ENCODE measurements at regions of chr9 and their contacts with region 1.

Region 1: GRCh38 chr9:22158927-22159346 is 149.8 kb upstream of the CDKN2B start:
- DNase-seq: peak; percentile 59
- H3K4me3 ChIP-seq: no peak overlapping the region
- H3K27ac ChIP-seq: peak overlapping the region; percentile 84
- H3K4me1 ChIP-seq: peaks cover 29% of the 10 kb centered on the region
- H3K27me3 ChIP-seq: no peaks in the 10 kb centered on the region
- CTCF ChIP-seq: no peak
- POLR2A ChIP-seq: peak; percentile 54

Region 2: DNA sequence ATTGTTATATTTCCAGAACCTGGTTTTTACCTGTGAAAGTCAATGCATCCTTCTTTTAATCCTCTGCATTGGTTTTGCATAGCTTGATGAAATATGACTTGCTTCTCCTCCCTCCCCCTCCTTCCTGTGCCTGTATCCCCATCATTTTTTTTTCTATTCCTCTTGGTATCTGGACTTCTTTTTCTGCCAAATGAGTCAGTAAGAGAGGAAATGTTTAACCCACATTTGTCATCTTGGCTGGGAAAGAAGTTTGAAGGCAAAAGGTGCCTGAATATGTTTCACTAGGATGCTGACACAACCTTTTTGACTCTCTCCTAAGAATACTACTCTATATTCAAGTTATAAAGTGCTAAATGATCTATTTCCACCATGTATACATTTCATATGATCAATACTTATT is 114.4 kb before region 1 on chr9:
- CTCF ChIA-PET with region 1: no interaction called
- POLR2A ChIA-PET with region 1: no interaction called
- dilution Hi-C with region 1: no loop called
- intact Hi-C with region 1: loop called (anchors 1 kb)
- DNase-seq: peak; percentile 87
- H3K4me3 ChIP-seq: no peak overlapping the region
- H3K27ac ChIP-seq: no peak overlapping the region
- H3K4me1 ChIP-seq: peaks cover 24% of the 10 kb centered on the region
- H3K27me3 ChIP-seq: no peaks in the 10 kb centered on the region
- CTCF ChIP-seq: no peak
- POLR2A ChIP-seq: no peak

Region 3: DNA sequence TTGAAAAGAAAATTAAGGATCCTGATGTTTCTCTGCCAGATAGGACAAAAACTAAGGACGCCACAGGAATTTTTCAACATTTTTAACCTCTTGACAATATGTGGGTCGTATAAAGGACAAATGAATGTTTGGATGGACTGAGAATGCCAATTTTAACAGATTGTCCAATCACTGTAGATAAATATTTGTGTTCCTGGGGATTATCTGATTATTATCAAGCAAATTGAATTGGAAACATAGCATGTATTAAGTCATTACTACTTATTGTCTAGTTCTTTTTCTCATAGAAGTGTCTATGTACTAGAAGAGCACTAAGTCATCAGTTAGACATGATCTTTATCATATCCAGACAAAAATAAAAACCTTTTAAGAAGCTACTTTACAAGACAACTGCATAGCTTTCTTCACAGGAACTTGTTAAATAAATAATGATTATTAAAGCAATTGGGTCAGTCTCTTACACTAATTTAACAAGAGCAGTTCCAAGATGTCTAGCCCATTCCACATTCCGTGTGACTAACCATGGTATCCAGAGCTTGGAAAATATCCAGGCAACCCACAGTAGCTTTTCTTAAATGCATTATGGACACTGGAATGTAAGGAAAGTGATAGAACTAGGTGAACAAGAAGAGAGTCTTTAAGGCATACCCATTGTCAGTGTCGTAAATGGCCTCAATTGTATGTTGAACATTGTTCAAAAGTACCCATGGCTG is 22.3 kb before region 1 on chr9:
- CTCF ChIA-PET with region 1: no interaction called
- POLR2A ChIA-PET with region 1: no interaction called
- dilution Hi-C with region 1: no loop called
- intact Hi-C with region 1: no loop called
- DNase-seq: no peak
- H3K4me3 ChIP-seq: no peak overlapping the region
- H3K27ac ChIP-seq: no peak overlapping the region
- H3K4me1 ChIP-seq: no peaks in the 10 kb centered on the region
- H3K27me3 ChIP-seq: no peaks in the 10 kb centered on the region
- CTCF ChIP-seq: no peak
- POLR2A ChIP-seq: no peak

Region 4: DNA sequence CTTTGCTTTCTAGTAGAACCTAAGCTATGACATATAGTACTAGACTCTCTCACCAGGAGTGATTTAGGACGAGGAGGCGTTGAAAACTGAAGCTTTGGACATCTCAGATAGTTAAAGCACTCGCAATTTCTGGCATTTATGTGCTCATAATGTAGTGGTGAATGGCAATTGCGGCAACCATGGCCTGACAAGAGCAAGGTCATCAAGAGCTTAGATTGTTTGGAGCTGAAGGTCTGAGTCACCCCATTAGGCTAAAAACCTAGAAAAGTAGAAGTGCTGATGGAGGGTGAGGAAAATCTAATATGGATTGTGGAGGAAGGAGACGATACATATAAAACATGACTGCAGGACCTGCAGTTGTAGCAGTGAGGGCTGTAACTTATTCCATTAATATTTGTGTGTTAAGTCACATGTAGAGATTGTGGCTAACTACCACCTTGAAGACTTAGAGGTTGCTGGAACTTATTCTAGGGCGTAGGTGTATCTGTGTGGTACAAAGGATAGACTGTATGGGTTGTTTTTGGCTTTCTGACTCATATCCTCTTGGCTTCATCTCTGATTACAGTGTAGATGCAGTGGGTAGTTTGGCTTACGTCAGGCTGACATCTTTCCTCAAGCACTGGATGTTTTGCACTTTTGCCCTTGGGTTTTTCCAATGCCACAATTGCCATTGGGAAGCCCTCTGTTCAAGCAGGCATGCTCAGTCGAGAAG is 11.0 kb before region 1 on chr9:
- CTCF ChIA-PET with region 1: interaction called, 6 read pairs
- POLR2A ChIA-PET with region 1: no interaction called
- dilution Hi-C with region 1: no loop called
- intact Hi-C with region 1: loop called (anchors 1 kb)
- DNase-seq: peak; percentile 69
- H3K4me3 ChIP-seq: no peak overlapping the region
- H3K27ac ChIP-seq: peak overlapping the region; percentile 49
- H3K4me1 ChIP-seq: peaks cover 33% of the 10 kb centered on the region
- H3K27me3 ChIP-seq: no peaks in the 10 kb centered on the region
- CTCF ChIP-seq: no peak
- POLR2A ChIP-seq: no peak

Region 5: GRCh38 chr9:22189471-22189870 is 30.5 kb after region 1 on chr9:
- CTCF ChIA-PET with region 1: no interaction called
- POLR2A ChIA-PET with region 1: no interaction called
- dilution Hi-C with region 1: no loop called
- intact Hi-C with region 1: no loop called
- DNase-seq: no peak
- H3K4me3 ChIP-seq: no peak overlapping the region
- H3K27ac ChIP-seq: no peak overlapping the region
- H3K4me1 ChIP-seq: no peaks in the 10 kb centered on the region
- H3K27me3 ChIP-seq: peaks cover 4 to 8% of the 10 kb centered on the region in 2 experiments
- CTCF ChIP-seq: no peak
- POLR2A ChIP-seq: no peak

Region 6: GRCh38 chr9:22211593-22212360 is 52.8 kb after region 1 on chr9:
- CTCF ChIA-PET with region 1: interaction called, 7 read pairs
- POLR2A ChIA-PET with region 1: no interaction called
- dilution Hi-C with region 1: no loop called
- intact Hi-C with region 1: loop called (anchors 2 kb)
- DNase-seq: peak; percentile 92
- H3K4me3 ChIP-seq: no peak overlapping the region
- H3K27ac ChIP-seq: peak overlapping the region; percentile 21
- H3K4me1 ChIP-seq: peaks cover 30% of the 10 kb centered on the region
- H3K27me3 ChIP-seq: no peaks in the 10 kb centered on the region
- CTCF ChIP-seq: no peak
- POLR2A ChIP-seq: no peak